ENCODE measurements at regions of chr11 and their contacts with region 1.

Region 1: DNA sequence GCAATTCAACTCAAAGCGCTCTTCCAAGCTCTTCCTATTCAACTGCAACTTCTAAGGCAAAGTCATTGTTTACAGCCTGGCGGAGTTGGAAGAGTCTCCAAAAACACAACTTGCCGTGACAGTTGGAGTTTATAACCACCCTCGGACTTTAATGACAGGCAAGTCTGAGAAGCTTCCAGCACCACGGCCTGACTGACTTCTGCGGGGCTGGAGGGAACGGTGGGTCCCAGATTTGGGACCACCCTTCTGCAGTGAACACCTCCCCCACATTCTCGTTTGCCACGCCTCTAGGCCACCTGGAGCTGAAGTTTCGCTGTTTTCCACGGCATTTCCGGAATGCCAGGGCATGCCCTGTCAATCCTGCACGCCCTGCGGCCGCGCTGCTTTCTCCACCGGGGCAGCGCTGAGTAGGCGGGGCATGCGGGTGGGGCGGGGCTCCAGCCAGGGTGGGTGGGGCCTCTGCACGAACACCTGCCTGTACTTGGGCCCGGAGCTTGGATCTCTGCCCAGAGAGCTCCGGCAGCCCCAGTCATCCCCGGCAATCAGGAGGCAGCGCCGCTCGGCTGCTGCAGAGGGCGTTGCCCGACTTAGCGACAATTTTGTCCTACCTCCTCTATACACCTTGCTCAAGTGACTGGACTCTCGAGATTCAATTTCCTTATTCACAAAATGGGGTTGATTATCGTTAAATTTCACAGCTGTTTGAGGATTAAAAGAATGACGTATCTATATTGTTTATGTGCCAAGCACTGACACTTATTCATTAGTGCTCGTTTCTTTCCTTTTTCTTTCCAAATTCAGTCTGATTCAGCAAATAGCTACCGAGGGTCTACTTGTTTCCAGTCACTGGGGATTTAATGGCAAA is 48.7 kb upstream of the BIRC3 start:
- DNase-seq: peak; percentile 96
- H3K4me3 Mint-ChIP-seq: peak overlapping the region; percentile 80
- H3K27ac Mint-ChIP-seq: peak overlapping the region; percentile 93
- H3K4me1 Mint-ChIP-seq: peaks cover 28% of the 10 kb centered on the region
- H3K27me3 Mint-ChIP-seq: no peaks in the 10 kb centered on the region
- CTCF ChIP-seq: peak; percentile 37

Region 2: GRCh38 chr11:102007567-102008437 is 260.8 kb before region 1 on chr11:
- CTCF ChIA-PET with region 1: interaction called, 42 read pairs
- POLR2A ChIA-PET with region 1: interaction called, 18 read pairs
- intact Hi-C with region 1: loop called (anchors 2 kb)
- DNase-seq: peak; percentile 70
- H3K4me3 Mint-ChIP-seq: no peak overlapping the region
- H3K27ac Mint-ChIP-seq: peak overlapping the region; percentile 90
- H3K4me1 Mint-ChIP-seq: peaks cover 31% of the 10 kb centered on the region
- H3K27me3 Mint-ChIP-seq: no peaks in the 10 kb centered on the region
- CTCF ChIP-seq: peak; percentile 44

Region 3: DNA sequence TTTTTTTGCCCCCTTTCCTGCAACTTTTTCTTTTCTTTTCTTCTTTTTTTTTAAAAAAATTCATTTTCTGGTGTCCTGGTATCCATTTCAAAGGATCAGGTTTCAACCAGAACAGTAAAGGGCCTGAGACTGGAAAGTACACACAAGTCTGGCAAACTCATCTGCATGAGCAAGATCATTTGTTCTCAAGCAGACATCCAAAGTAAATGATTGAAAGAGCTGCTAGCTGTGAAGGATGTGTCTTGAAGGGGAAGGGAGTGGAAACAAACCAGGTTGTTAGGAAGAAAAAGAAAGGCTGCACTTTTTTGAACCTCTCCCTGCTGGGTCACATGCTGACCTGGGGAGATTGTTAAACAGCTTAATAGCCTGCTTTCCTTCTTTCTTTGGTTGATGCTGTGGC is 153.0 kb before region 1 on chr11:
- CTCF ChIA-PET with region 1: interaction called, 14 read pairs
- POLR2A ChIA-PET with region 1: interaction called, 50 read pairs
- intact Hi-C with region 1: loop called (anchors 1 kb)
- DNase-seq: peak; percentile 54
- H3K4me3 Mint-ChIP-seq: no peak overlapping the region
- H3K27ac Mint-ChIP-seq: no peak overlapping the region
- H3K4me1 Mint-ChIP-seq: peaks cover 25% of the 10 kb centered on the region
- H3K27me3 Mint-ChIP-seq: no peaks in the 10 kb centered on the region
- CTCF ChIP-seq: no peak

Region 4: GRCh38 chr11:102171101-102171500 is 97.5 kb before region 1 on chr11:
- CTCF ChIA-PET with region 1: interaction called, 6 read pairs
- POLR2A ChIA-PET with region 1: interaction called, 20 read pairs
- intact Hi-C with region 1: no loop called
- DNase-seq: peak; percentile 64
- H3K4me3 Mint-ChIP-seq: no peak overlapping the region
- H3K27ac Mint-ChIP-seq: peak overlapping the region; percentile 76
- H3K4me1 Mint-ChIP-seq: peaks cover 34% of the 10 kb centered on the region
- H3K27me3 Mint-ChIP-seq: no peaks in the 10 kb centered on the region
- CTCF ChIP-seq: no peak

Region 5: DNA sequence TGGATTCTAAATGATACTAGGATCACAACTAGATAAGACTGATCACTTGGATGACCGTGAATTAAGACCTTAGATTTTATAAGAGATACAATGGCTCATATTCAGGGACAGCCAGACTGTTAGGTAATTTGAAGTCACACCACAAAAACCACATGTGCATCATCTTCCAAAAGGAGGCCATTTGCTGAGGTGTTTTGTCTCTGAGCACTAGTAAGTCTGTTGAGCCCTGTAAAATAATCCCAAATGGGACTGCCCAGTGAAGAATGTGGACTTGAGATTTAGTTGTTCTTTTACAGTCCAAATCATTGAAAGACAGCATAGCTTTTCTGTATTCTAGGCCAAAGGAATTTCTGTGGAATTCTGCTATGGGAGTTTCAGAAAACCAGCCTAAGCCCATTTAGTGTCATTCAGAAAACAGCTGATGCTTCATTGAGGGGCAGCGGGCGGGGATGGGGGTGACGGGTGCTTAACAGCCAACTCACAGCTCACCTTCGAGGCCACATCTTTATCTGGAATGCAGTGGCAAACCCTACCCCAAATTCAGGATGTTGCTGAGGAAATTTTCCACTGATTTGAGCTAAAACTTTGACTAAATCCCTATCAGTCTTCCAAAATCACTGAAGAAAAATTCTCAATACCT is 31.3 kb before region 1 on chr11:
- CTCF ChIA-PET with region 1: interaction called, 17 read pairs
- POLR2A ChIA-PET with region 1: interaction called, 21 read pairs
- intact Hi-C with region 1: no loop called
- DNase-seq: no peak
- H3K4me3 Mint-ChIP-seq: no peak overlapping the region
- H3K27ac Mint-ChIP-seq: peak overlapping the region; percentile 39
- H3K4me1 Mint-ChIP-seq: peaks cover 12% of the 10 kb centered on the region
- H3K27me3 Mint-ChIP-seq: no peaks in the 10 kb centered on the region
- CTCF ChIP-seq: no peak

Region 6: DNA sequence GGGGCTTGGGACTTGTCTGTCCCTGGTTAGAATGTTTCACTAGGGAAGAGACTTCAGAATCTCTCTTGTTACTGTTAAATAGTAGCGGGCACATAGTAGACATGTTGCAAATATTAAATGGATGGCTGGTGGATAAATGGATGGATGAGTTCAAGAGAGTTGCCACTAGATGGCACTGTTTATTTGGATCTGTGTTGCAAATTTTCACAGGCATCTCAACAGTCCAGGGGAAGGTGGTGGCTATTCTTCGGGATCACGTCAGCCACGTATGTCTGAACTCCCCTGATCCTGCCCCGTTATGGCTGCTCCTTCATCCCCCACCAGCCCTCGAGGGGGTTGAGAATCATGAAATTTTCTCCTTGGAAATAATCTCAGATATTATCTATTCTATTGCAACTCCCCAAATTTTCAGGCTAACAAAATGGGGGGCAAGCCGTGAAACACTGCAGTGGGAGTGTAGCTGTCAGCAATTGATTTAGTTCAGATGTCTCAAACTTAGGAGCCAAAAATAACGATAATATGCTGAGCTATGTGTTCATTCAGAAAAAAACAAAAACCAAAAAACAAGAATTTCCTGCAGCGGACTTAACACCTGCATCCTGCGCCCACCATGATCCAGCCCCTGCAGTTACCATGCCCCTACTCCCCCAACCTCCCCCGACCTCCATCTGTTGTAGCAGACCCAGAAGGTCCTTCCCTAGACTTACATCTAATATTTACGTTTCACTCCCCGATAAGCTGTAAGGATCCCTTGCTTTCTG is 19.6 kb after region 1 on chr11:
- CTCF ChIA-PET with region 1: interaction called, 29 read pairs
- POLR2A ChIA-PET with region 1: interaction called, 14 read pairs
- intact Hi-C with region 1: no loop called
- DNase-seq: peak; percentile 80
- H3K4me3 Mint-ChIP-seq: no peak overlapping the region
- H3K27ac Mint-ChIP-seq: no peak overlapping the region
- H3K4me1 Mint-ChIP-seq: peaks cover 19% of the 10 kb centered on the region
- H3K27me3 Mint-ChIP-seq: no peaks in the 10 kb centered on the region
- CTCF ChIP-seq: peak; percentile 63